CD4-positive, alpha-beta memory T cell (primary cell): ENCODE measurements at regions of chr20 and their contacts with region 1.

Region 1: DNA sequence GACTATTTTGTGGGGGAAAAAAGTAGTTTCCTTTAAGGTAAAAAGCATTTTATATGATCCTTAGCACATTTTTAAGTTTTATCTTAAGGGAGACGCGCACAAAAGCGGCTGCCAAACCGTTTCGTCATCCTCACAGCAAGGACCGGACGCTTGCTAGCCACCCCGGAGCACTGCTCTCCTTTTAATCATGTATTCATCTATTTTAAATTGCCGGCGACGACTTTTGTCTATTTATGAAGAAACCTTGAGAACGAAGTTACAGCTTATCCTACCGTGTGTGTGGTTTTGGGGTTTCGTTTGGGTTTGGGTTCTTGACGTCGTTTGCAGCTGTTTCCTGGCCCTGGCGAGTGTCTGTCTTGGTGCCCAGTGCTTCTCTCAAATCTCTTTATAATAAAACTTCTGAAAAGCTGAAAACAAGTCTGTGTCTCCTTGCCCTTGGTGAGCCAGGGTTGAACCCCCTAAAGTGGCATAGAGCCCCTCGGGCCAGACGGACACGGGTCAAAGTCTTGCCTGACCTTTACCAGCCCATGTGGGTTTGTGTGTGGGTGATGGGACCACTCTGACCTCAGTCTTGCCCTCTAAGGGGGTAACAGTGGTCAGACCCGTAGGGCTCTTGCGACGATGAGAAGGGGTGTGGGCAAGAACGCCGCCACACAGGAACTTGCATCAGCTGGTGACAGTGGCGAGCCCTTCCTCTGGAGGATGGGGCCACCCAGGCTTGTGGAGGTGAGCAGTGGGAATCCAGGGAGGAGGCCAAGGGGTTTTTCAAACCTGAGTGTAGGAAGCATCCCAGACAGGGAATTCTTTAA is 117.6 kb downstream of the JPH2 start:
- DNase-seq: peak; percentile 77 to 89 (median 84)
- H3K4me3 ChIP-seq: peak overlapping the region; percentile 40 to 57
- H3K4me3 Mint-ChIP-seq: peak overlapping the region; percentile 83 to 92 (median 88)
- H3K27ac ChIP-seq: peak overlapping the region; percentile 55
- H3K27ac Mint-ChIP-seq: peak overlapping the region; percentile 87 to 99 (median 98)
- H3K4me1 ChIP-seq: peaks cover 57% of the 10 kb centered on the region
- H3K4me1 Mint-ChIP-seq: peaks cover 23 to 68% (median 44%) of the 10 kb centered on the region in 4 donors
- H3K27me3 ChIP-seq: no peaks in the 10 kb centered on the region
- H3K27me3 Mint-ChIP-seq: no peaks in the 10 kb centered on the region

Region 2: DNA sequence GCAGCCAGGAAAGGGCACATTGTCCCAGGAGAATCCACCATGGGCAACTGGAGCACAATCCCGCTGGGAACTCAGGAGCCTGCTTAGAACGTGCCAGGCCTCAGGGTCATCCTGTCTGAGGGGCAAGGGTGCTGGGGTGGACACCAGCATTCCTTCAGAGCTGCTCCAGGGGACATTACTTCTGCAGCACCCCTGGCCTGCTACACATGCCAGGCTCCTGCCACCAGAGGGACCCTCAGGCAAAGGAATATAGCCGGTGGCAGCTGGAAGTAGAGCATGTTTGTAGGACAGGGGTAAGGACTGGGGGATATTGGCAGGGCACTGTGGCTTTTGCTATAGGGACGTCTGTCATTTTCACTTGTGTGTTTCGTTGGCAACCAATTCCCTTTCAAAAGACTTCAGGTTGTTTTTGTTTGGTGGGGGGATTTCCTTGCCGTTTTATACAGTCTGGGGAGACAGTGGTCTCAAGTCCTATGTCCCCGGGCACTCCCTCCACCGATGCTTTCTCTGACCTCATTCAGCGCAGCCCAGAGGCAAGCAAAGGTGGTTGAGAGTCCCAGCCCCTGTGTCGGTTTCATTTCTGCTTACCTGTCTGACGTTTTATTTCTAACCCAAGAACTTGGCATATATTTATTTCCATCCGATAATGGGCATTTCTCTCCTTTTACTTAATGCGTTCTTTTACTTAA is 13.3 kb before region 1 on chr20:
- CTCF ChIA-PET with region 1: interaction called, 30 read pairs
- POLR2A ChIA-PET with region 1: interaction called, 8 read pairs
- intact Hi-C with region 1: loop called (anchors 1 kb)
- DNase-seq: peak; percentile 32 to 57 (median 54)
- H3K4me3 ChIP-seq: no peak overlapping the region
- H3K4me3 Mint-ChIP-seq: no peak overlapping the region
- H3K27ac ChIP-seq: no peak overlapping the region
- H3K27ac Mint-ChIP-seq: no peak overlapping the region
- H3K4me1 ChIP-seq: no peaks in the 10 kb centered on the region
- H3K4me1 Mint-ChIP-seq: peaks cover 0 to 6% (median 4%) of the 10 kb centered on the region in 4 donors
- H3K27me3 ChIP-seq: no peaks in the 10 kb centered on the region
- H3K27me3 Mint-ChIP-seq: peaks cover 0 to 2% of the 10 kb centered on the region in 2 donors